HepG2 (cell line): ENCODE measurements at regions of chr5 and their contacts with region 1.

Region 1: DNA sequence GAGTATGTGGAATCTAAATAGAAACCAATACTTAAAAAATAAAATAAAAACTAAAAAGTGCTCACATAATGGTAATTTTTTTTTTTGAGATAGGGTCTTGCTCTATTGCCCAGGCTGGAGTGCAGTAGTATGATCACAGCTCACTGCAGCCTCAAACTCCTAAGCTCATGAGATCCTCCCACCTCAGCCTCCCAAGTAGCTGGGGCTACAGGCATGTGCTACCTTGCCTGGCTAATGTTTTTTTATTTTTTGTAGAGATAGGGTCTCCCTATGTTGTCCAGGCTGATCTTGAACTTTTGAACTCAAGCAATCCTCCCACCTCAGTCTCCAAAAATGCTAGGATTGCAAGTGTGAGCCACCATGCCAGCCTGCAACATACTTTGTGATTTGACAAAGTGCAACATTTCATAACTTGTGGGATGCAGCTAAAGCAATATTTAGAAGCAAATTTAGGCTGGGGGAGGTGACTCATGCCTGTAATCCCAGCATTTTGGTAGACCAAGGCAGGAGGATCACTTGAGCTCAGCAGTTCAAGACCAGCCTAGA is 18.4 kb downstream of the AP3B1 start:
- DNase-seq: no peak
- ATAC-seq: no peak
- H3K4me3 ChIP-seq: no peak overlapping the region
- H3K27ac ChIP-seq: no peak overlapping the region
- H3K4me1 ChIP-seq: peaks cover 38% of the 10 kb centered on the region
- H3K27me3 ChIP-seq: no peaks in the 10 kb centered on the region
- CTCF ChIP-seq: no peak
- EP300 ChIP-seq: no peak
- POLR2A ChIP-seq: no peak
- RAD21 ChIP-seq: no peak

Region 2: GRCh38 chr5:78065663-78066062 is 210.4 kb before region 1 on chr5:
- CTCF ChIA-PET with region 1: no interaction called
- POLR2A ChIA-PET with region 1: no interaction called
- in situ Hi-C with region 1: no loop called
- intact Hi-C with region 1: no loop called
- DNase-seq: no peak
- ATAC-seq: peak; percentile 66
- H3K4me3 ChIP-seq: no peak overlapping the region
- H3K27ac ChIP-seq: no peak overlapping the region
- H3K4me1 ChIP-seq: no peaks in the 10 kb centered on the region
- H3K27me3 ChIP-seq: no peaks in the 10 kb centered on the region
- CTCF ChIP-seq: peak; percentile 36
- EP300 ChIP-seq: no peak
- POLR2A ChIP-seq: no peak
- RAD21 ChIP-seq: no peak

Region 3: GRCh38 chr5:78287833-78288232 is 11.8 kb after region 1 on chr5:
- CTCF ChIA-PET with region 1: no interaction called
- POLR2A ChIA-PET with region 1: no interaction called
- in situ Hi-C with region 1: no loop called
- intact Hi-C with region 1: loop called (anchors 2 kb)
- DNase-seq: no peak
- ATAC-seq: no peak
- H3K4me3 ChIP-seq: no peak overlapping the region
- H3K27ac ChIP-seq: no peak overlapping the region
- H3K4me1 ChIP-seq: peaks cover 38% of the 10 kb centered on the region
- H3K27me3 ChIP-seq: no peaks in the 10 kb centered on the region
- CTCF ChIP-seq: no peak
- EP300 ChIP-seq: no peak
- POLR2A ChIP-seq: no peak
- RAD21 ChIP-seq: no peak